ENCODE measurements at regions of chr10 and their contacts with region 1.

Region 1: GRCh38 chr10:6088721-6089390 is at the start of gene RBM17:
- DNase-seq: peak; percentile 94 to 100 (median 99)
- ATAC-seq: peak; percentile 95
- H3K4me3 ChIP-seq: peak within 1 kb of the TSS; percentile 85
- H3K4me3 Mint-ChIP-seq: peak within 1 kb of the TSS; percentile 84 to 100 (median 94)
- H3K27ac ChIP-seq: peak within 1 kb of the TSS; percentile 84
- H3K27ac Mint-ChIP-seq: peak within 1 kb of the TSS; percentile 77 to 91 (median 87)
- H3K4me1 ChIP-seq: peaks cover 26 to 49% of the 10 kb centered on the region in 2 donors
- H3K4me1 Mint-ChIP-seq: peaks cover 46 to 77% (median 67%) of the 10 kb centered on the region in 7 donors
- H3K27me3 ChIP-seq: no peaks in the 10 kb centered on the region
- H3K27me3 Mint-ChIP-seq: no peaks in the 10 kb centered on the region
- total RNA-seq, gene RBM17: 120 to 158 (median 127) TPM

Region 2: GRCh38 chr10:5684318-5684970 is 404.4 kb before region 1 on chr10 and contains the start of gene TASOR2:
- CTCF ChIA-PET with region 1: no interaction called
- POLR2A ChIA-PET with region 1: no interaction called
- intact Hi-C with region 1: loop called in 1 of 2 experiments (anchors 2 kb)
- DNase-seq: peak; percentile 91 to 96 (median 93)
- ATAC-seq: peak; percentile 92
- H3K4me3 ChIP-seq: peak within 1 kb of the TSS; percentile 76
- H3K4me3 Mint-ChIP-seq: peak within 1 kb of the TSS; percentile 93 to 100 (median 98)
- H3K27ac ChIP-seq: peak within 1 kb of the TSS; percentile 96
- H3K27ac Mint-ChIP-seq: peak within 1 kb of the TSS; percentile 90 to 99 (median 98)
- H3K4me1 ChIP-seq: peaks cover 15 to 24% of the 10 kb centered on the region in 2 donors
- H3K4me1 Mint-ChIP-seq: peaks cover 31 to 55% (median 44%) of the 10 kb centered on the region in 7 donors
- H3K27me3 ChIP-seq: no peaks in the 10 kb centered on the region
- H3K27me3 Mint-ChIP-seq: peaks cover 0 to 12% (median under 1%) of the 10 kb centered on the region in 5 donors
- total RNA-seq, gene TASOR2: 55.0 to 86.5 (median 62.1) TPM

Region 3: DNA sequence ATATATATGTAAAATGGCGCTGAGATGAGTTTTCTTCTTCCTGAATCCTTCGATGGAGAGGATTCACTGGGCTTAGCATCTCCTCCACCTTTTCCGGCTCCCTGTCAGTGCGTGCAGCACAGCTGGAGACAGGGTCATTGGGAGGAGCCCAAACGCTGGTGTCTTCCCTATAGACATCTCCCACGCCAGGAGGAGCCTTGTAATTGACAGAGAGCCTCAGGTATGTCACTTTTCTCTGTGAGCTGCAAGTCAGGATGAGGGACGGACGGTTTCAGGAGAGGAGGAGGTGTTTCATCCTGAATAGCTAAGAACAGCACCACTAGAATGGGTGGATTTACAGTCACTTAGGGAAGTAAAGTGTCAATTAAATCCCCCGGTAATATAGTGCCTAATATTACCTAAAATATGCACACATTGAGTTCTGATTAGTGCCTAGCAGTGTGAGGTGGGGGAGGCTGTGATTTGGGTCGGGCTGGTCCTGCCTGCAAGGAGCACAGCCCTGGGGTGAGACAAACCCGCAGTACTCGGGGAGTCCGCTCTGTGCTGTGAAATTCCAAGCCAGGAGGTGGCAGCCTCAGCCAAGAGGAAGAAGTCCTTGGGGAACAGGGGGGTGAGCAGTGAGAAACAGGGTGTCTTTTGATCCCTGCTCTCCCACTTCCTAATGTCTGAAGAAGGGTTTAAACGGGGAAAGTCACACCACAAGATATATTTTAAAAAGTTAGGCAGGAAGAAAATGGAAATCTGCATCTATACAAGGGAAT is 139.7 kb before region 1 on chr10:
- CTCF ChIA-PET with region 1: no interaction called
- POLR2A ChIA-PET with region 1: no interaction called
- intact Hi-C with region 1: loop called in 1 of 2 experiments (anchors 1 kb)
- DNase-seq: peak in 2 of 9 donors; percentile 4 to 12
- ATAC-seq: peak; percentile 28
- H3K4me3 ChIP-seq: no peak overlapping the region
- H3K4me3 Mint-ChIP-seq: no peak overlapping the region
- H3K27ac ChIP-seq: no peak overlapping the region
- H3K27ac Mint-ChIP-seq: no peak overlapping the region
- H3K4me1 ChIP-seq: no peaks in the 10 kb centered on the region
- H3K4me1 Mint-ChIP-seq: peaks cover 0 to 14% (median 8%) of the 10 kb centered on the region in 7 donors
- H3K27me3 ChIP-seq: no peaks in the 10 kb centered on the region
- H3K27me3 Mint-ChIP-seq: no peaks in the 10 kb centered on the region

Region 4: GRCh38 chr10:6033954-6034353 is 54.9 kb before region 1 on chr10:
- CTCF ChIA-PET with region 1: interaction called, 13 read pairs
- POLR2A ChIA-PET with region 1: interaction called, 4 read pairs
- intact Hi-C with region 1: loop called in 1 of 2 experiments (anchors 1 kb)
- DNase-seq: no peak
- ATAC-seq: no peak
- H3K4me3 ChIP-seq: no peak overlapping the region
- H3K4me3 Mint-ChIP-seq: no peak overlapping the region
- H3K27ac ChIP-seq: no peak overlapping the region
- H3K27ac Mint-ChIP-seq: peak overlapping the region in 2 of 9 donors; percentile 34 to 48
- H3K4me1 ChIP-seq: peaks cover 26 to 32% of the 10 kb centered on the region in 2 donors
- H3K4me1 Mint-ChIP-seq: peaks cover 29 to 60% (median 40%) of the 10 kb centered on the region in 7 donors
- H3K27me3 ChIP-seq: no peaks in the 10 kb centered on the region
- H3K27me3 Mint-ChIP-seq: no peaks in the 10 kb centered on the region

Region 5: GRCh38 chr10:6068422-6068821 is 20.4 kb before region 1 on chr10:
- CTCF ChIA-PET with region 1: interaction called, 59 read pairs
- POLR2A ChIA-PET with region 1: interaction called, 52 read pairs
- intact Hi-C with region 1: loop called (anchors 1 kb)
- DNase-seq: peak in 7 of 9 donors; percentile 65 to 76 (median 69)
- ATAC-seq: peak; percentile 85
- H3K4me3 ChIP-seq: peak overlapping the region; percentile 46
- H3K4me3 Mint-ChIP-seq: peak overlapping the region; percentile 76 to 91 (median 82)
- H3K27ac ChIP-seq: peak overlapping the region; percentile 62
- H3K27ac Mint-ChIP-seq: peak overlapping the region; percentile 16 to 94 (median 90)
- H3K4me1 ChIP-seq: peaks cover 0 to 55% of the 10 kb centered on the region in 2 donors
- H3K4me1 Mint-ChIP-seq: peaks cover 52 to 94% (median 82%) of the 10 kb centered on the region in 7 donors
- H3K27me3 ChIP-seq: no peaks in the 10 kb centered on the region
- H3K27me3 Mint-ChIP-seq: no peaks in the 10 kb centered on the region

Region 6: DNA sequence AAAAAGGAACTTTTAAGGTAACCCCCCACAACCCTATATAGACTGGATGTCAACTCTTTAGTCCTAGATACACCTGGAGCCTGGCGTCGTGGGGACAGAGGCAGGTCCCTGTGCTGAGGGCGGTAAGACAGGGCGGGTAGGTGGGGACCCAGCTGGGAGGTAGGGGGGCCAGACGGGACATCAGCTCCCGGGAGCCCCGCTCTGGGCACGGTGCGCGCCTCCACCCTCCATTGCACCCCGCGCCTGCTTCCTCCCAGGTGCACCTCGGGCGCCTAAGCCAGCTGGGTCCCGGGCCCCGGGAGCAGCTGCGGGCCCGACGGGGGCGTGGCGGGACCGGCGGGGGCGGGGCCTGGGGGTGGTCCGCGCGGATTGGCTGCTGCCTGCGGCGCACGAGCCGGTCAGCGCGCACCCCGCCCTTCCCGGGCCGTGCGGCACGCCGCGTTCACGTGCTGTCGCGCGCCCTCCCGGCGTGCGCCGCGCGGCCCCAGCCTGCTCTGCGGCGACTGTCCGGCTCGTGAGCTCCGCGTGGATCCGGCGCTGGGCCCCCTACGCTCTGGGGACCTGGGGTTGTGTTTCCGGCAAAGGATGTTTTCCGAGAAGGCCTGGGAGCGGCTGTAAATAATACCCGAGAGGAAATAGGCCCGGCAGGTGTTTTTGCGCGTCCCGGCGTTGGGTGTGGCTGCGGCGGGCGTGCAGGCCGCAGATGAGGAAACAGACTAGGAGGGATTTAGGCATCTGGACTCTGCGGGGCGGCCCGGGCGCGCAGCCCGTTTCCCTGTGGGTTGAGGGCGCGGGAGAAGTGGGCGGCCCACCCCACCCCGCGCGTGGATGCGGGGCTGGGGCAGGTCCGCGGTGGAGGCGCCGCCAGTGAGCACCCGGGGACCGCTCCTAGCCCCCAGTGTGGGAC is 74.8 kb after region 1 on chr10:
- CTCF ChIA-PET with region 1: interaction called, 3 read pairs
- POLR2A ChIA-PET with region 1: interaction called, 4 read pairs
- intact Hi-C with region 1: loop called in 1 of 2 experiments (anchors 5 kb)
- DNase-seq: peak; percentile 89 to 95 (median 94)
- ATAC-seq: peak; percentile 96
- H3K4me3 ChIP-seq: peak overlapping the region; percentile 81
- H3K4me3 Mint-ChIP-seq: peak overlapping the region; percentile 85 to 95 (median 92)
- H3K27ac ChIP-seq: peak overlapping the region; percentile 95
- H3K27ac Mint-ChIP-seq: peak overlapping the region; percentile 91 to 99 (median 97)
- H3K4me1 ChIP-seq: peaks cover 25 to 33% of the 10 kb centered on the region in 2 donors
- H3K4me1 Mint-ChIP-seq: peaks cover 30 to 64% (median 57%) of the 10 kb centered on the region in 7 donors
- H3K27me3 ChIP-seq: no peaks in the 10 kb centered on the region
- H3K27me3 Mint-ChIP-seq: no peaks in the 10 kb centered on the region

Region 7: DNA sequence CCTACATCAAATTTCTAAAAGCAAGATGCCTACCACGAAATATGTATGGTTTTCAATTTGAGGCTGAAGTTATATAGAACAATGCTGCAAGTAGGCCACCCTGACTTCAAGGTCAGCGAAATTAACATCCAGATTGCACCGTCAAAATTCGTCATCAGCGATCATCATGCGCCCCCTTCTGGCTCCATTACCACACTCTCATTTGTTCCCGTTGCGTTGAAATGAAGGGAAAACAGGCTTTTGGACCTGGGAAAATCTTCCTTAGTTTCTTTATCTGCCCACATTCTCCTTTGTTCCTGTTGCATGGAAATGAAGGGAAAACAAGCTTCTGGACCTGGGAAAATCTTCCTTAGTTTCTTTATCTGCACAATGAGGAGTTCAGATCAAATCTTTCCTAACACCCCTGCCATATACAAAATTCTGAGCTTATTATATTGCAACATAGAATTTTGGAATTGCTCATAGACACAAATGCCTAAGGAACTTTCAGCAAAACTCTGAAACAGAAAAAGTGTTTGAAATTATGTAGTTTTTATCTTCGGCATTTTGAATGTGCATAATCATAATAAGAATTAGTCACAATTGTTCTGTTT is 589.5 kb after region 1 on chr10:
- CTCF ChIA-PET with region 1: no interaction called
- POLR2A ChIA-PET with region 1: no interaction called
- intact Hi-C with region 1: loop called in 1 of 2 experiments (anchors 2 kb)
- DNase-seq: peak in 8 of 9 donors; percentile 24 to 55 (median 48)
- ATAC-seq: peak; percentile 56
- H3K4me3 ChIP-seq: no peak overlapping the region
- H3K4me3 Mint-ChIP-seq: no peak overlapping the region
- H3K27ac ChIP-seq: no peak overlapping the region
- H3K27ac Mint-ChIP-seq: no peak overlapping the region
- H3K4me1 ChIP-seq: no peaks in the 10 kb centered on the region
- H3K4me1 Mint-ChIP-seq: peaks cover 0 to 12% (median 0%) of the 10 kb centered on the region in 7 donors
- H3K27me3 ChIP-seq: no peaks in the 10 kb centered on the region
- H3K27me3 Mint-ChIP-seq: peaks cover 0 to 66% (median 0%) of the 10 kb centered on the region in 5 donors

Region 8: DNA sequence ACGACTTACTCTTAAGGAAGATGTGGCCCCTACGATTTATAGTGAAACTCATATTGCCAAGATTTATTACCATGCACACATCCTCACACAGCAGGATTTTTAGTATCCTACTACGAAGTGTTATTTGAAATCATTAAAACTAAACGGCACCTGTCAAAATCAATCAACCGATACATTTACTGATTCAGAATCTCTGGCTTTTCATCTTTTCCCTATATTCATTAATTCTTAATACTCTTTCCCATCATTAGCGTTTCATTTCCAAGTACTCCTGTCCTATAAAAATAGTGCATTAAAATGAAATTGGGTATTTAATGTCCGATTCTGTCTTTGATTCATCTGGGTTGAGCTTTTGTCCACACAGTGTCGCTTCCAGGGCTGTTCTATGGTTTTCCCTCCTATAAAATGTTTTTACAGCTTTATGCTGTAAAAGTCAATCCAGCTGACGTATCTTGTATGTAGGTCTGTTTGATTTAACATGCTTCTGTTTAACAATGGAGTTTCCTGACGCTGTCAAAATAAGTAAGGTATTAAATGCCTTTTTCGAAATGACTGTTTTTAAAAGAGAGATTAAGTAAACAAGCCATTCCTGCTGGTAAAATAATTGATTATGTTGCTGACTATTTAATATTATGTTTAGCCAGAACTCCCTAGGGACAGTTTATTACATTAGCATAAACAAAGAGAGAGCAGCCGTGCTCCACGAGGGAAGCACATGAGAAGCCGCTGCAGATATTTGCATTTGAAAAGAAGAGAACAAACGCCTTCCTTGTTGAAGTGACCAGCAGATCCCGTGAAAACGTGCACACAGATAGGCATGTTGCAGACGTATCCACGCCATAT is 1344.2 kb after region 1 on chr10:
- CTCF ChIA-PET with region 1: no interaction called
- POLR2A ChIA-PET with region 1: no interaction called
- intact Hi-C with region 1: no loop called
- DNase-seq: no peak
- ATAC-seq: no peak
- H3K4me3 ChIP-seq: no peak overlapping the region
- H3K4me3 Mint-ChIP-seq: no peak overlapping the region
- H3K27ac ChIP-seq: no peak overlapping the region
- H3K27ac Mint-ChIP-seq: no peak overlapping the region
- H3K4me1 ChIP-seq: peaks cover 0 to 4% of the 10 kb centered on the region in 2 donors
- H3K4me1 Mint-ChIP-seq: peaks cover 5 to 18% (median 11%) of the 10 kb centered on the region in 7 donors
- H3K27me3 ChIP-seq: no peaks in the 10 kb centered on the region
- H3K27me3 Mint-ChIP-seq: peaks cover 0 to 30% (median 0%) of the 10 kb centered on the region in 5 donors